ENCODE measurements at regions of chr14 and their contacts with region 1.

Region 1: GRCh38 chr14:93086441-93087055 is 29.2 kb downstream of the ITPK1 start:
- DNase-seq: no peak
- ATAC-seq: no peak
- H3K4me3 ChIP-seq: no peak overlapping the region
- H3K27ac ChIP-seq: no peak overlapping the region
- H3K4me1 ChIP-seq: 0 out of 2 replicates have a peak, but pooled peaks cover 5% of the 10 kb centered on the region
- H3K27me3 ChIP-seq: no peaks in the 10 kb centered on the region
- CTCF ChIP-seq: no peak

Region 2: GRCh38 chr14:92970271-92970670 is 116.3 kb before region 1 on chr14:
- CTCF ChIA-PET with region 1: no interaction called
- POLR2A ChIA-PET with region 1: interaction called, 11 read pairs
- in situ Hi-C with region 1: no loop called
- intact Hi-C with region 1: no loop called
- DNase-seq: no peak
- ATAC-seq: no peak
- H3K4me3 ChIP-seq: no peak overlapping the region
- H3K27ac ChIP-seq: no peak overlapping the region
- H3K4me1 ChIP-seq: no peaks in the 10 kb centered on the region
- H3K27me3 ChIP-seq: no peaks in the 10 kb centered on the region
- CTCF ChIP-seq: no peak

Region 3: DNA sequence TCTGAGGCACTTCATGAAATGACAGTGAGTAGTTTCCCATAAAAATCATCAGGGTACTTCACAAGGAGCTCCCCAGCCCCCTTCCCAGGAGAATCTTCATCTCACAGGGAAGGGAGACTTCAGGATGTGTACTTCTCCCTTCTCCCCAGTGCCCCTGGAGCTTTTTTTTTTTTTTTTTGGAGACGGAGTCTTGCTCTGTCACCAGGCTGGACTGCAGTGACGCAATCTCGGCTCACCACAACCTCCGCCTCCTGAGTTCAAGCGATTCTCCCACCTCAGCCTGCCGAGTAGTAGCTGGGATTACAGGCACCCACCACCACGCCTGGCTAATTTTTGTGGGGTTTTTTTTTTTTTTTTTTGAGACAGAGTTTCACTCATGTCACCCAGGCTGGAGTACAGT is 18.8 kb after region 1 on chr14:
- CTCF ChIA-PET with region 1: no interaction called
- POLR2A ChIA-PET with region 1: interaction called, 20 read pairs
- in situ Hi-C with region 1: no loop called
- intact Hi-C with region 1: no loop called
- DNase-seq: no peak
- ATAC-seq: no peak
- H3K4me3 ChIP-seq: no peak overlapping the region
- H3K27ac ChIP-seq: no peak overlapping the region
- H3K4me1 ChIP-seq: no peaks in the 10 kb centered on the region
- H3K27me3 ChIP-seq: no peaks in the 10 kb centered on the region
- CTCF ChIP-seq: no peak

Measured in Panc1 (cell line).